ENCODE measurements at regions of chr2 and their contacts with region 1.

Region 1: GRCh38 chr2:58571181-58571852 is 330.2 kb upstream of the FANCL start:
- DNase-seq: peak; percentile 50
- ATAC-seq: peak; percentile 98
- H3K4me3 ChIP-seq: no peak overlapping the region
- H3K27ac ChIP-seq: no peak overlapping the region
- H3K4me1 ChIP-seq: no peaks in the 10 kb centered on the region
- H3K27me3 ChIP-seq: no peaks in the 10 kb centered on the region
- CTCF ChIP-seq: peak; percentile 76
- EP300 ChIP-seq: no peak
- POLR2A ChIP-seq: no peak
- RAD21 ChIP-seq: no peak

Region 2: DNA sequence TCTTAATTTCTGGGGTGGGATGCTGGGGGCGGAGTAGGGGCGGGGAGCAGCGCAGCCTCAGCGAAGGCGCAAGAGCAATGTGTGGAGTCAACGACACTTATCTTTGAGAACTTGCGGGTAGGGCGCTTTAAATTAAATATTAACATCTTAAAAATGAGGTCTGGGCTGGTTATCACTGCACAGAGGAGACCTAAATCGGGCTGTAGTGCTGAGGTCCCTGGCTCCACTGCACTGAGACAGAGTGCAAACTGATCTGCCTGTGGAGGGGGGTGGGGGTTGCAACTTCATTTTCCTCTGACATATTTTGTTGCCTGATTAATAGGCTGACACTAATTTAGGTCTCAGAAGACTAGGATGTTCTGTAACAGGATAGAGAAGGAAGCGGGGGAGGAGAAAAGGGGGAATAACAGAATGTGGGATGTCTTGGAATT is 77.2 kb before region 1 on chr2:
- CTCF ChIA-PET with region 1: no interaction called
- POLR2A ChIA-PET with region 1: no interaction called
- in situ Hi-C with region 1: no loop called
- intact Hi-C with region 1: no loop called
- DNase-seq: no peak
- ATAC-seq: no peak
- H3K4me3 ChIP-seq: no peak overlapping the region
- H3K27ac ChIP-seq: no peak overlapping the region
- H3K4me1 ChIP-seq: no peaks in the 10 kb centered on the region
- H3K27me3 ChIP-seq: no peaks in the 10 kb centered on the region
- CTCF ChIP-seq: no peak
- EP300 ChIP-seq: no peak
- POLR2A ChIP-seq: no peak
- RAD21 ChIP-seq: no peak

Region 3: DNA sequence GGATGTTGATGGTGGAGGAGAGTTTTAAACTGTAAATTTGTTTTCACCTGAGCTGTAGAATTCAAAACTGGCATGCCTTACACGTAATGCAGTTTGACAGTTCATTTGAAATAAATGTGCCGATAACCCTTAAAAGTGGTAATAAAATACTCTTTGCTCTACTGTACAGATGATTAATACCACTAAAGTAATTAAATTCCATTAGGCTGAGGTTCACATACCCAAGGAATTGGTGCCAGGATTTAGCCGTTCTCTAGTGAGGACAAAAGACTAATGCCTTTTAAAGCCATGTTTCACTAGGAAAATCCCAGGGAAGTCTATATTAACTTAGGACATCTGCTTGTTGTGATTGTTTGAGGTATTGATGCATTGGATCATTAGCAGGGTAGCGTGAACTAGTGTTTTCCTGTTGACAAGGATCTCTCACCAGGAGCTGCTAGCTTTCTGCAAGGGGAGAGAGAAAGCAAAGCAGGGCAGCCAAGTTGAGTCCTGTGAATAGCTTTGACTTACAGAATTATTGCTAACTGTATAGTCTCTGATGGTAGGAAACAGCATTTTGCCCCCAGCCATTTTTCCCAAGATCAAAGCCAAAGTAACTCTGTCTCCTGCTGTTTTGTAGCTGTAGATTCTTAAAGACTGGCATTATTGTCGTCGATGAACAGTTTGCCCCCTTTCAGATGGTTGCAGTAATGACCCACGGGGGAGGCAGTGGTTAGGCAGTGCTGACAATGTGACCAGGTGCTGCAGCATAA is 49.3 kb before region 1 on chr2:
- CTCF ChIA-PET with region 1: no interaction called
- POLR2A ChIA-PET with region 1: no interaction called
- in situ Hi-C with region 1: no loop called
- intact Hi-C with region 1: no loop called
- DNase-seq: no peak
- ATAC-seq: no peak
- H3K4me3 ChIP-seq: no peak overlapping the region
- H3K27ac ChIP-seq: no peak overlapping the region
- H3K4me1 ChIP-seq: no peaks in the 10 kb centered on the region
- H3K27me3 ChIP-seq: no peaks in the 10 kb centered on the region; a peak in 1 of 5 replicates
- CTCF ChIP-seq: no peak
- EP300 ChIP-seq: no peak
- POLR2A ChIP-seq: no peak
- RAD21 ChIP-seq: no peak

Region 4: DNA sequence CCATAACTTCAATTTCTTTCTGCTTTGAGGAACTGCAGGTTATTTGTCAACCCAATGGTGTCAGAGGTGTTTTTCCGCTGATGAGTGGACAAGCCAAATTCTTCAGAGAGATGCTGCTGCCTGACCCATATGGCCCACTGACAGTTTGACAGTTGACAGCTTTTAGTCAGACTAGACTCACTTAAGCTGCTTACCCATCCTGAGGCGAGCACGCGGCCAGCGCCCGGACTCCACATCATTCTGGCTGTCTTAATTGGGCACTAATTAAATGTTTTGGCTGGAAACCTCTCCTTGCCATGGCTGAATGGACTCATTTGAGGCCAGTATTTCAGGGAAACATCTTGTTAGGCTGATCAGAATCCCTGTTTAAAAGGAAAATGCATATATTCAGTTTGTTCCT is 14.1 kb before region 1 on chr2:
- CTCF ChIA-PET with region 1: no interaction called
- POLR2A ChIA-PET with region 1: no interaction called
- in situ Hi-C with region 1: no loop called
- intact Hi-C with region 1: no loop called
- DNase-seq: no peak
- ATAC-seq: no peak
- H3K4me3 ChIP-seq: no peak overlapping the region
- H3K27ac ChIP-seq: no peak overlapping the region
- H3K4me1 ChIP-seq: no peaks in the 10 kb centered on the region
- H3K27me3 ChIP-seq: no peaks in the 10 kb centered on the region
- CTCF ChIP-seq: no peak
- EP300 ChIP-seq: no peak
- POLR2A ChIP-seq: no peak
- RAD21 ChIP-seq: no peak

Region 5: GRCh38 chr2:58645017-58645416 is 73.7 kb after region 1 on chr2:
- CTCF ChIA-PET with region 1: no interaction called
- POLR2A ChIA-PET with region 1: no interaction called
- in situ Hi-C with region 1: no loop called
- intact Hi-C with region 1: no loop called
- DNase-seq: no peak
- ATAC-seq: no peak
- H3K4me3 ChIP-seq: no peak overlapping the region
- H3K27ac ChIP-seq: no peak overlapping the region
- H3K4me1 ChIP-seq: no peaks in the 10 kb centered on the region
- H3K27me3 ChIP-seq: no peaks in the 10 kb centered on the region
- CTCF ChIP-seq: no peak
- EP300 ChIP-seq: no peak
- POLR2A ChIP-seq: no peak
- RAD21 ChIP-seq: no peak

Region 6: GRCh38 chr2:58680755-58681310 is 109.5 kb after region 1 on chr2:
- CTCF ChIA-PET with region 1: no interaction called
- POLR2A ChIA-PET with region 1: no interaction called
- in situ Hi-C with region 1: no loop called
- intact Hi-C with region 1: loop called (anchors 1 kb)
- DNase-seq: no peak
- ATAC-seq: no peak
- H3K4me3 ChIP-seq: no peak overlapping the region
- H3K27ac ChIP-seq: no peak overlapping the region
- H3K4me1 ChIP-seq: no peaks in the 10 kb centered on the region
- H3K27me3 ChIP-seq: no peaks in the 10 kb centered on the region
- CTCF ChIP-seq: no peak
- EP300 ChIP-seq: no peak
- POLR2A ChIP-seq: no peak
- RAD21 ChIP-seq: no peak

Region 7: GRCh38 chr2:58871469-58872142 is 300.3 kb after region 1 on chr2:
- CTCF ChIA-PET with region 1: no interaction called
- POLR2A ChIA-PET with region 1: no interaction called
- in situ Hi-C with region 1: no loop called
- intact Hi-C with region 1: loop called (anchors 2 kb)
- DNase-seq: no peak
- ATAC-seq: peak; percentile 38; the same call in 1 of the 3 replicates
- H3K4me3 ChIP-seq: no peak overlapping the region
- H3K27ac ChIP-seq: no peak overlapping the region
- H3K4me1 ChIP-seq: peaks cover 11% of the 10 kb centered on the region; the same call in 1 of the 2 replicates
- H3K27me3 ChIP-seq: no peaks in the 10 kb centered on the region
- CTCF ChIP-seq: no peak
- EP300 ChIP-seq: no peak
- POLR2A ChIP-seq: no peak
- RAD21 ChIP-seq: no peak

Measured in HepG2 (cell line).